Calu3 (cell line): ENCODE measurements at regions of chr6 and their contacts with region 1.

Region 1: DNA sequence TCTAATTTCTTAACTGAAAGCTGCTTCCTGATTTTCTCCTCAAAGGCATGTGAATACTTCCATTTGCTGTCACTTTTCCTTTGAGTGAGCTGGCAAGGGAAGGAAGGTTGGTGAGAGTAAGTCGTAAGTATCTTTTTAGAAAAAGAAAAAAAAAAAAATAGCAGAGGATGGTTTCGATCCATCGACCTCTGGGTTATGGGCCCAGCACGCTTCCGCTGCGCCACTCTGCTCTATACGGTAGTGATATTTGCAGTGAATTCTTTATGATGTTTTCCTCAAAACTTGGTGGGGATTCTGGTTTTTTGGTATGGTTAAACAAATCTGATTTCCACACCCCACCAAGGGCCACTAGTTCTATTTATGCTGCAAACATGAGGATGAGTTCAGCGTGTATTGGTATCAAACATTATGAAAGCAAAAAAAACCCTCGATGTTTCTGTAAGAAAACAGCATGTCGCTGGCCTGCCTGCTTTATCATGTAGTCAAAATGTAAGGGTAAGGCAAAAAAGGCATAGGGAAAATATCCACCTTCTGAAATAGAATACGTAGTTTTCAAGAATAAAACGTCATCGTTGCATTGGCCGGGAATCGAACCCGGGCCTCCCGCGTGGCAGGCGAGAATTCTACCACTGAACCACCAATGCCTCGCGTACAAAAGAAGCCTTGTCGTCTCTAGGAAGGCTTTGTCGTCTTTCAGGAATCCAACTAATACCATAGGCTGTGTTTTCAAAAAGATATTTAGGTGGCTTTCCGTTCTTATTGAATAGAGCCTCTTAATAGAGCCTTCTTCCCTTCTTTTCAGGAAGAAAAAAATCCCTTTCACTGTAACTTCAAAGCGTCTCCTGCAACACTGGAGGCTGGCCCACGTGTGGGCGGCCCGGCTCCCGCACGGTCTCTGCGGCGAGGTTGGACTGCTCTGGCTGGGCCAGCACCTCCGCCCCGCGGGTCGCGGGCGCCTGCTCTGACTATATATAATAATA is 9.6 kb downstream of the OR2B2 start:
- DNase-seq: peak; percentile 88
- H3K4me3 Mint-ChIP-seq: peak overlapping the region; percentile 87
- H3K27ac Mint-ChIP-seq: peak overlapping the region; percentile 99
- H3K4me1 Mint-ChIP-seq: peaks cover 16% of the 10 kb centered on the region
- H3K27me3 Mint-ChIP-seq: no peaks in the 10 kb centered on the region
- CTCF ChIP-seq: no peak

Region 2: GRCh38 chr6:27706431-27706830 is 196.2 kb before region 1 on chr6:
- CTCF ChIA-PET with region 1: no interaction called
- intact Hi-C with region 1: no loop called
- DNase-seq: no peak
- H3K4me3 Mint-ChIP-seq: no peak overlapping the region
- H3K27ac Mint-ChIP-seq: no peak overlapping the region
- H3K4me1 Mint-ChIP-seq: no peaks in the 10 kb centered on the region
- H3K27me3 Mint-ChIP-seq: no peaks in the 10 kb centered on the region
- CTCF ChIP-seq: no peak

Region 3: DNA sequence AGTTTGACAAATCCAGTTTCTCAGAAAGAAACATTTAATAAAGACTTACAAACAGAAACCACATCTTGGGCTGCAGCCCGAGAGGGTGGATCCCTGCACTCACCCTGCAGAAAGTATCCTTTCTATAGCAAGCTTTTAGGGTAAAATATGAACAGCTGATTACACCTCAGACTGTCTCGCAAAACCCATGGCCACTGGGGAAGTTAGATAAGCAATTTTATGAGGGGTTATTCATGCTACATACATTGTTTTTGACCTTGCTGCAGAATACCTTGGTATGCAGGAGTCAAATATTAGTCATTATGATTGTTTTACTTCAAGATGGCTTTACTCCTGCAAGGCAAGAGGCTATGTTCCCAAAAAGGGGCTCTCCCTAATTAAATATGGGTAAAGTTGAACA is 117.3 kb before region 1 on chr6:
- CTCF ChIA-PET with region 1: no interaction called
- intact Hi-C with region 1: no loop called
- DNase-seq: no peak
- H3K4me3 Mint-ChIP-seq: no peak overlapping the region
- H3K27ac Mint-ChIP-seq: no peak overlapping the region
- H3K4me1 Mint-ChIP-seq: no peaks in the 10 kb centered on the region
- H3K27me3 Mint-ChIP-seq: no peaks in the 10 kb centered on the region
- CTCF ChIP-seq: no peak

Region 4: DNA sequence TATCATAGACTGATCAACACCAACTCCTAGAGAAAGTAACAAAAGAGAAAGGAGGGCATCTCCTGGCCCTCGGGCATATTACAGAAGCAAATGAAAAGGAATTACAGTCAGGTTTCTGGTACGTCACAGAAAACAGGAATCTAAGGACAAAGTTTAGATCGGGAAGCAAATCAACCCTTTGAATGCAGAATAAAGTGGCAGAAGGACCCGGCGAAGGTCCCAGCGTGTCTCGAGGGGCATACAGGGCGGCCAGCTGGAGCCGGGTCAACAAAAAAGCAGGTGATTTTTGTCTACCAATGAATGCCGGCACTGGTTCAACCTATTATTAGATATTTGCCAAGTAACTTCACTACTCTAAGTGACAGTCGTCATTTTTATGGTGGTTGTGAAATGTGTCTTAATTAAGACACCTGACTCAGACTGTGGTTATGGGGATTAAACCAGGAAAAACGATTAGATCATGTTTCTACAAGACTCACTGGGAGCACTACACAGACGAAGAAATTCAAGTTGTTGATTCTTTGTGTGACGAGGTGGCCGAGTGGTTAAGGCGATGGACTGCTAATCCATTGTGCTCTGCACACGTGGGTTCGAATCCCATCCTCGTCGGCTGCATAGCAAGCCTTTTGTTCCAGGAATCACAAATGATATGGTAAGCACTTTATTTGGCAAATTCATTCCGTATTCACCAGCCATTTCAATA is 310.0 kb after region 1 on chr6:
- CTCF ChIA-PET with region 1: interaction called, 3 read pairs
- intact Hi-C with region 1: loop called (anchors 5 kb)
- DNase-seq: peak; percentile 90
- H3K4me3 Mint-ChIP-seq: peak overlapping the region; percentile 71
- H3K27ac Mint-ChIP-seq: peak overlapping the region; percentile 68
- H3K4me1 Mint-ChIP-seq: peaks cover 17% of the 10 kb centered on the region
- H3K27me3 Mint-ChIP-seq: no peaks in the 10 kb centered on the region
- CTCF ChIP-seq: no peak